MCF 10A (cell line): ENCODE measurements at regions of chr2 and their contacts with region 1.

Region 1: DNA sequence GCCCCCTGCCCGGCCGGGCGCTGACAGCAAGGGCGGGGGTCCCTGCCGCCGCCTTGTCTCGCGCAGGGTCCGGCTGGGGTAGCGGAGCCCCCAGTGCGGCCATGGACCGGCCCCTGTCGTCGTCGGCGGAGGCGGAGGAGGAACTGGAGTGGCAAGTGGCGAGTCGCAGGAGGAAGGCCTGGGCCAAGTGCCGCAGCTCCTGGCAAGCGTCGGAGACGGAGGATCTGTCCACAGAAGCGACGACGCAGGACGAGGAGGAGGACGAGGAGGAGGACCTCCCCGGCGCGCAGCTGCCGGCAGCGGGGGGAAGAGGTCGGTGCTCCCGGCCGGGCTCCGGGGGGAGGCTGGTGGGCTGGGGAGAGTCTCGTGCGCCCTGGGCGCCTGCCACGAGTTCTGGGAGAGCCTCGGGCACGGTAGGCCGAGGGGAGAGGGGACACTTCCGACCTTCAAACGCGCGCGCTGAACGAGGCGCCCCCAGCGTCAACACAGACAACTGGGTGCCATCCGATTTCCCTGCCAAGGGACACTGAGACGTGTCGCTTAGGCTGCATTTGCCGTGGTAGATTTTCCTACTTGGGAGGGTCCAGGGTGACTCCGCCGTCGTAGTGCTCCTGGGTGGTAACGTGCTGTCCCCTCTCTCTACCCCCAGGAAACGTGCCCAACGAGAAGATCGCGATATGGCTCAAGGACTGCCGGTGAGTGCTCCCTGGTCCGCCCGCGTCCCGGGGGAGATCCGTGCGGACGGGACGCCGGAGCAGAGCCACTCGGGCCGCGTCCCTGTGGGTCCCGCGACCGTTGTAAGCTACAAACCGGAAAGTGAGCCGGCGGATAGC is 652 bp downstream of the ITPRID2 start:
- DNase-seq: peak; percentile 71
- H3K4me3 Mint-ChIP-seq: peak overlapping the region; percentile 92
- H3K27ac Mint-ChIP-seq: peak overlapping the region; percentile 95
- H3K4me1 Mint-ChIP-seq: peaks cover 18% of the 10 kb centered on the region
- H3K27me3 Mint-ChIP-seq: no peaks in the 10 kb centered on the region
- CTCF ChIP-seq: no peak

Region 2: DNA sequence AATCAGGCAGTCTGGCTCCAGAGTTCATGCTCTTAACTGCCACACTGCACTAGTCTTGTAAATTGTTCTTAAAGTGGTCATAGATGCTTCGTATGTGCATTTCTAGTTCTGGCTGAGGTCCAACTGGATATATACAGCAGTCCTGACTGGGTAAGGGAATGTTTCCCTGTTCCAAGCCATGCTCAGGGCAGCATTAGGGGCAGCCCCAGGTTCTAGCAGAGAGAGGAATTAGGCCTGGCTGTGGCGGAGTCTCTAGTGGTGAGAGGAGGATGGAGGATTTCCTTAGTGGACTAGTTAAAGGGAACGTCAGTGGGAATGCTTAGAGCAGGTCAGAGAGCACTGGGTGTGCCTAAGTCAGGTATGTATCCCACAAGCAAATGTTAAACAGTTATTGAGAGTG is 883.8 kb before region 1 on chr2:
- CTCF ChIA-PET with region 1: no interaction called
- POLR2A ChIA-PET with region 1: no interaction called
- intact Hi-C with region 1: no loop called
- DNase-seq: no peak
- H3K4me3 Mint-ChIP-seq: no peak overlapping the region
- H3K27ac Mint-ChIP-seq: peak overlapping the region; percentile 4
- H3K4me1 Mint-ChIP-seq: peaks cover 12% of the 10 kb centered on the region
- H3K27me3 Mint-ChIP-seq: no peaks in the 10 kb centered on the region
- CTCF ChIP-seq: no peak

Region 3: GRCh38 chr2:181742922-181743722 is 149.1 kb before region 1 on chr2:
- CTCF ChIA-PET with region 1: interaction called, 34 read pairs
- POLR2A ChIA-PET with region 1: interaction called, 5 read pairs
- intact Hi-C with region 1: loop called (anchors 1 kb)
- DNase-seq: peak; percentile 69
- H3K4me3 Mint-ChIP-seq: no peak overlapping the region
- H3K27ac Mint-ChIP-seq: no peak overlapping the region
- H3K4me1 Mint-ChIP-seq: peaks cover 6% of the 10 kb centered on the region
- H3K27me3 Mint-ChIP-seq: no peaks in the 10 kb centered on the region
- CTCF ChIP-seq: peak; percentile 53

Region 4: DNA sequence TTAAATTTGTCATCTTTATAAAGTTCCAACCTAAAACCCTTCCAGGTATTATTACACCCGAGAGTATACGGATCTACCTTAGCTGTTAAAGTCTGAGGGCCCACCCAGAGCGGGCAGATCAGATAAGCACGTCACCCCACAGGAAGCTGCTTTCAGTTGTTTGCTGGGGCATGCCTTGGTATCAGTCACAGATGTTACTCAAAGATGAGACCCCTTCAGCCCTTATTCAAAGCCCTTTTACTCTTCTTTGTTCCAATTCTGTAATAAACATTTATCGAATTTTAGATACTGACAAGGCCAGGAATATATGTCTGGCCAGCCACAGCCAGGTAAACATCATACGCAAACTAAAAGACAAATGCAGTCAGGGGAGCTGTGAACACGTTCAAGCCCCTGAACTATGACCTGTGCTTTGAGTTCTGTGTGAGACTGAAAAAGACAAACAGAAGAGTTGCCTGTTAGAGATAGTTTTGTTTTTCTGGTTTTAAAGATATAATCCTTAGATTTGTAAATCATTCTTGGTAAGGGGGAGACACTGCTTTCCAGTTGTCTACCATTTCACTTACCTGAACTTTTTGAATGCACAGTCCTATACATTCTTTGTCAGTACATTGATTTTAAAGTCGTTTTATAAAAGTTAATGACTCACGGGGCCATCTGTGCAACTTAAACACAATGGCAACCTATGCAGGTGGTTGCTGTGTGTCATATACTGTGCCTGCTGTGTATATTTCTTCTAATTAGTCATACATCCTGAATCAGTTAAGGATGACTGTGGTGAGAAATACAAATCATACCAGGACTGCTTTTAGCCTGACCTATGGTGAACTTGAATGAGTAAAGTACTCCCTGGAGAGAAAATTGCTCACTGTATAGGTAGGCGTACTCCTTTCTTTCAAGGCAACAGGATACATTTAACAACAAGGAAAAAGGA is 101.2 kb before region 1 on chr2:
- CTCF ChIA-PET with region 1: interaction called, 8 read pairs
- POLR2A ChIA-PET with region 1: interaction called, 23 read pairs
- intact Hi-C with region 1: loop called (anchors 5 kb)
- DNase-seq: peak; percentile 93
- H3K4me3 Mint-ChIP-seq: no peak overlapping the region
- H3K27ac Mint-ChIP-seq: peak overlapping the region; percentile 89
- H3K4me1 Mint-ChIP-seq: peaks cover 30% of the 10 kb centered on the region
- H3K27me3 Mint-ChIP-seq: no peaks in the 10 kb centered on the region
- CTCF ChIP-seq: no peak

Region 5: DNA sequence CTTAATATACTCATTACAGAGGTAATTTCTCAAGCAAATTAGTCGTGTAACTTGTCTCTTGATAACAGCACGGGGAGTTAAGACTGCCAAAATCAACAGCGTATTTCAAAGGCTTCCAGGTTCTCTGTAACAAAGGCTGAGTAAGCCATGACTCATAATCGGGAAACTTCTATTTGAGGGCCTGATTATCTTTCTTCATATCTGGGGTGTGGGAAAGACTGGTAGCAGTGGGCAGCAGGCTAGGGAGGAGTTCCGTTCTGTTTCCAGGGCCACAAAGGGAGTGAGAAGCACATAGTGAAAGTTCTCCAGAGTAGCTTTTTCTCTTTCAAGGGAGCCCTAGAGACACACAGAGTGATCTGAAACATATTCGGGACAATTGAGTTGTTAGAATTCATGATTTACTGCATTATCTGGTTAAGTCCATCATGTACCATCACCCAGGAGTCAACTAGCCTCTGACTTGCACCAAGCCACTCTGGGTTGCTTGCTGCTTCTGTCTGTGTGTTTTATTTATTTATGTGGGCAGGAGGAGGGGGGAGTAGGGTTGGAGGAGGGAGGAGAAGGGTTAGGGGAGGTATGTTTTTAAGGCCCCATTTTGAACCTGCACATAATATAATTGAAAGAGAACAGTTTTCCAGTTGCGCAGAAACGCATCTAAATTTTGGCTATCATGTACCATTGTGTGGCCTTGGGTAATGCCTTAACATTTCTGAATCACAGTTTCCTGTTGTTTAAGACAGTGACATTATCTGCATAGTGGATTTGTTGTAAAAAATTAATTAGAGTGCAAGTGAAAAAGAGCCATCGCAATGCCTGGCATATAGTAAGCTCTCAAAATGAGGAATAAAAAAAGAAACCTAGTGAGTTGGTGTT is 81.1 kb before region 1 on chr2:
- CTCF ChIA-PET with region 1: interaction called, 7 read pairs
- POLR2A ChIA-PET with region 1: interaction called, 3 read pairs
- intact Hi-C with region 1: loop called (anchors 2 kb)
- DNase-seq: peak; percentile 97
- H3K4me3 Mint-ChIP-seq: peak overlapping the region; percentile 57
- H3K27ac Mint-ChIP-seq: peak overlapping the region; percentile 90
- H3K4me1 Mint-ChIP-seq: peaks cover 18% of the 10 kb centered on the region
- H3K27me3 Mint-ChIP-seq: no peaks in the 10 kb centered on the region
- CTCF ChIP-seq: no peak

Region 6: GRCh38 chr2:181857202-181857870 is 34.8 kb before region 1 on chr2:
- CTCF ChIA-PET with region 1: interaction called, 4 read pairs
- POLR2A ChIA-PET with region 1: interaction called, 16 read pairs
- intact Hi-C with region 1: no loop called
- DNase-seq: peak; percentile 80
- H3K4me3 Mint-ChIP-seq: no peak overlapping the region
- H3K27ac Mint-ChIP-seq: peak overlapping the region; percentile 35
- H3K4me1 Mint-ChIP-seq: peaks cover 6% of the 10 kb centered on the region
- H3K27me3 Mint-ChIP-seq: no peaks in the 10 kb centered on the region
- CTCF ChIP-seq: no peak

Region 7: DNA sequence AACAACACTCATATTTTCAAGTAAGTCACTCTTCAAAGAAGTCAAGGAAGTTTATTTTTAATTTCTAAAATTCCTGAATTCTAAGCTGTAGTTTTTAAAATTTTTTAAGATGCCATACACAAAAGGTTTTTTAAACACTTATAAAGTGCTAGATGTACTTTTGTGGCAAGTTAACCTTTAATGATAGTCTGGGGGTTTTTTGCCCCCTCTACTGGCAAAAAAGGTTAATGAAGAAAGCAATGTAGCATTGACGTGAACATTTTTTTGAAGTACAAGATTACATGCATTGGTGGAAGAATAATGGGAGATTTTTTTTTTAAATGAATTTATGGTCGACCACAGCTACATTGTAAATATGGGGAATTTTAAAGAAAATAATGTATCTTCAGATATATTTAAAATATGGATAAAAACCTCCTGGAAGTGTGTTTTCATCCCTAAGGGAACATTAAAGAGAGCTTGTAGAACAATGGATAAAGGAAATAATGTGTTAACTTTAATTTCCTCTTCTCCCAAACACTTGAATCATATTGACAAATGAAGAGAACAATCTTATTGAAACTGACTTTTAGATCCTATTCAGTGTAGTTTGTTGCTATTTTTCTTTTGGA is 11.9 kb after region 1 on chr2:
- CTCF ChIA-PET with region 1: interaction called, 13 read pairs
- POLR2A ChIA-PET with region 1: interaction called, 28 read pairs
- intact Hi-C with region 1: no loop called
- DNase-seq: peak; percentile 54
- H3K4me3 Mint-ChIP-seq: no peak overlapping the region
- H3K27ac Mint-ChIP-seq: peak overlapping the region; percentile 67
- H3K4me1 Mint-ChIP-seq: peaks cover 12% of the 10 kb centered on the region
- H3K27me3 Mint-ChIP-seq: no peaks in the 10 kb centered on the region
- CTCF ChIP-seq: peak; percentile 39

Region 8: DNA sequence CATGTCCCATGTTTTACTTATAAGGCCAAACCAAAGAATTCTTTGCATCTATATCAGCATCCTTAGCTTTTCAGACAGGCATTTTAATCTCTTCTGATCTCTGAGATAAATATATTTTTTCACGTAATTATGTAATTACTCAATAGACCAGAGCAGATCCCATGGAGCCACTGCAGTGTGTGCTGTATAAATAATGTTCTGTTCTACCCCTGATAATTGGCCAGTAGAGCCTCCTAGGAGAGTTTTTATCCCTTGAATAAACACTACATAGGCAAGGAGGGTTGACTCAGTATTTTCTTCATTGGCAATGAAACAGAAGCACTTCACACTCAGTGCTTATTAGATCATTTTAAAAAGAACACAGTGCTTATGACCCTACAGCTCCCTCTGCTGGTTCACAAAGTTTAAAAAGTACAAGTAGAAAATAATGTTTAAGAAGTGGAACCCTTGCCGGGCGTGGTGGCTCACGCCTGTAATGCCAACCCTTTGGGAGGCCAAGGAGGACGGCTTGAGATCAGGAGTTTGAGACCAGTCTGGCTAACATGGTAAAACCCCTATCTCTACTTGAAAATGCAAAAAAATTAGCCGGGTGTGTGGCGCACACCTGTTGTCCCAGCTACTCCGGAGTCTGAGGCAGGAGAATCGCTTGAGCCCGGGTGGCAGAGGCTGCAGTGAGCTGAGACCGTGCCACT is 185.4 kb after region 1 on chr2:
- CTCF ChIA-PET with region 1: interaction called, 10 read pairs
- POLR2A ChIA-PET with region 1: interaction called, 4 read pairs
- intact Hi-C with region 1: loop called (anchors 1 kb)
- DNase-seq: peak; percentile 85
- H3K4me3 Mint-ChIP-seq: no peak overlapping the region
- H3K27ac Mint-ChIP-seq: no peak overlapping the region
- H3K4me1 Mint-ChIP-seq: no peaks in the 10 kb centered on the region
- H3K27me3 Mint-ChIP-seq: no peaks in the 10 kb centered on the region
- CTCF ChIP-seq: peak; percentile 70